ENCODE measurements at regions of chr9 and their contacts with region 1.

Region 1: DNA sequence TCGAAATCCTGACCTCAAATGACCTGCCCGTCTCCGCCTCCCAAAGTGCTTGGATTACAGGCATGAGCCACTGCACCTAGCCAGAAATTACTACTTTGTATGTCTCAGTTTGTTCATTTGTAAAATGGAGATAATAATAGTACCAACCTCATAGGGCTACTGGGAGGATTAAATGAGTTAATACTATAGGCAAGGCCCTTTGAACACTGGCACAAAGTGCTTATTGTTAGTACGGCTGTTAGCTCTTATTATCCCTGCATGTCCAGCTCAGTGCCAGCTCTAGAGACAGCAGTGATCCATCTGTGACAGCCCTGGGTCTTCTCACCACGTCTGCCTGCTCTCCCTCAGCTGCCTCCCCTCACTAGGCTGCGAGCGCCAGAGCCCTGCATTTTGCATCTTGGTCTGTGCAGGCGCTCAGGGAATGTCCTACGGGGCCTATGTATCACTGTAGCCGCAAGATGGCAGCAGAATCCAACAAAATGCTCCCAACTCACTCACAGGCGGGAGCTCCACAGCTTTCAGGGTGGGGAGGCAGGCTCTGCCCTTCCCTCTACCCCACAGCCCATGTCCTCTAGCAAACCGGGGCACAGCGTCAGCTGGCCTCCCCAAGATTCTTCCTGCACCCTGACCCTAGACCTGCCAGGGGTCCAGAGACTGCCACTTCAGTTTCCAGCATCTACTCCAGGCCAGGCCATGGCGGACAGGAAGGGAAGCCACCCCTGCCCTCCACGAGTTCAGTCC is 17.7 kb upstream of the AKNA start:
- H3K4me3 Mint-ChIP-seq: no peak overlapping the region
- H3K27ac Mint-ChIP-seq: no peak overlapping the region
- H3K4me1 Mint-ChIP-seq: peaks cover 19% of the 10 kb centered on the region
- H3K27me3 Mint-ChIP-seq: no peaks in the 10 kb centered on the region

Region 2: DNA sequence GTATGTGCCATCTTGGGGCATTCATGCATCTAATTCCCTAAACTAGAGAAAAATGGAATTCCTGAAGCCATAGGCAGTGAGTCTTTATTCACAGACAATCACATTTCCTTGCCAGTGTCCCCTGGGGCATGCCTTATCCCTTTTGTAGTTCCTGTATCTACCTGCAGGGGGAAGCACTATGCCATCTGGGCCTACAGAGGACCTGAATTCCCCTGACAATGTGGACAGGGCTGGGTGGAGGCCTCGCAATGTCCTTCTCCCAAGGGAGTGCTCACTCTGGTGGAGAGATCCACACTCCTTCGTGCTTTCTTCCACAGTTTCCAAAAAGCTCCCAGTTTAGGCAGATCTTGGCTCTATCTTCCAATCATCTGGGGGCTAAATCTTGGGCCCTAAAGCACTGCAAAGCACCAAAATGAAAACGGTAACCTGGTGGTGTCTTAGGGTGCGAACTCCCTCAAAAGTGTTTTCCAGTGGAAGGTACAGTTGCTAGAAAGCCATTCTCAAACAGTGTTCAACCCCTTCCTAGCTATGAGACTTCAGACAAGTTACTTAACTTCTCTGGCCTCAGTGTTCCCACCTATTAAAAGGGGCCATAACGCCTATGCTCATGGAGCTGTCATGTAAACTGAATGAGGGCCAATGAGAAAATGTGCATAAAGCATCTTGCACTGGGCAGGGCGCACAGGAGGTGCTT is 82.3 kb after region 1 on chr9:
- intact Hi-C with region 1: loop called (anchors 5 kb)
- H3K4me3 Mint-ChIP-seq: no peak overlapping the region
- H3K27ac Mint-ChIP-seq: no peak overlapping the region
- H3K4me1 Mint-ChIP-seq: peaks cover 16% of the 10 kb centered on the region
- H3K27me3 Mint-ChIP-seq: peaks cover 4% of the 10 kb centered on the region

Region 3: DNA sequence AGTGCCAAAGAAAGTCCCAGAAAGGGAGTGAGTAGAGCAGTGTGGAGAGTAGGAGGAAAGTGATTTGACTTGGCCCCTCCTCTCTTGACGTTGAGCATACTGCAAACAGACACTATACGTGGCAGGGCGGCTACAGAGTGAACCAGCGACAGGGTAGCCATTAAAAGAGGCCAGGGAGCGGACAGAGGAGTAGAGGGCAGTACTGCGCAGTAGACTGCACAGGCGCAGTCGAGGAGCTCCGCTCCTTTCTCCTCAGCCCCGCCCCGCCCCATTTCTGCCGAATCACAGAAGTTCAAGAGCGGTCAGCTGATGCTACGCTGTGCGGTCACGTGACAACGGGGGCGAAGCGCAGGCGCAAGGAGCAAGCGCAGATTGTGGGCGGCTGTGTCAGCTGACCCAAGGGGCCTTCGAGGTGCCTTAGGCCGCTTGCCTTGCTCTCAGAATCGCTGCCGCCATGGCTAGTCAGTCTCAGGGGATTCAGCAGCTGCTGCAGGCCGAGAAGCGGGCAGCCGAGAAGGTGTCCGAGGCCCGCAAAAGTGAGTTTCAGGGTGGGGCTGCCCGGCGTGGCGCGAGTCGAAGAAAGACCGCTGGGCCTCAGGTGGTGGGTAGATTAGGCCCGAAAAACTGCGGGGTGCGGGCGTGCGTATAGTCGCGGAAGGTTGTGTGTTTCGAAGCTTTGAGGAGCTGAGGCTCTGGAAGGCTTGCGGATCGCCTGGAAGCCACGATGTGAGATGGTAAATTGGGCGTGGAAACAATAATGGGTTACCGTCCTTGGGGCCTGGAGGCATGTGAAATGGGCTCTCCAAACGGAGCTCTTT is 182.1 kb after region 1 on chr9 and contains the start of gene ATP6V1G1:
- intact Hi-C with region 1: loop called (anchors 2 kb)
- H3K4me3 Mint-ChIP-seq: peak within 1 kb of the TSS; percentile 98
- H3K27ac Mint-ChIP-seq: peak within 1 kb of the TSS; percentile 100
- H3K4me1 Mint-ChIP-seq: peaks cover 46% of the 10 kb centered on the region
- H3K27me3 Mint-ChIP-seq: no peaks in the 10 kb centered on the region

Region 4: GRCh38 chr9:114611516-114612271 is 206.2 kb after region 1 on chr9:
- intact Hi-C with region 1: no loop called
- H3K4me3 Mint-ChIP-seq: peak overlapping the region; percentile 69
- H3K27ac Mint-ChIP-seq: peak overlapping the region; percentile 65
- H3K4me1 Mint-ChIP-seq: peaks cover 72% of the 10 kb centered on the region
- H3K27me3 Mint-ChIP-seq: peaks cover 2% of the 10 kb centered on the region